Naive thymus-derived CD4-positive, alpha-beta T cell (primary cell): ENCODE measurements at regions of chr12 and their contacts with region 1.

Region 1: GRCh38 chr12:116559162-116559935 is at the start of gene MAP1LC3B2:
- DNase-seq: peak; percentile 53 to 85 (median 77)
- ATAC-seq: peak; percentile 92
- H3K4me3 ChIP-seq: peak within 1 kb of the TSS; percentile 54
- H3K4me3 Mint-ChIP-seq: peak within 1 kb of the TSS; percentile 70 to 90 (median 86)
- H3K27ac ChIP-seq: peak within 1 kb of the TSS; percentile 49
- H3K27ac Mint-ChIP-seq: peak within 1 kb of the TSS; percentile 88 to 99 (median 96)
- H3K4me1 ChIP-seq: peaks cover 29% of the 10 kb centered on the region in 2 donors
- H3K4me1 Mint-ChIP-seq: peaks cover 24 to 54% (median 48%) of the 10 kb centered on the region in 7 donors
- H3K27me3 ChIP-seq: no peaks in the 10 kb centered on the region
- H3K27me3 Mint-ChIP-seq: peaks cover 0 to 6% (median 0%) of the 10 kb centered on the region in 5 donors
- total RNA-seq, gene MAP1LC3B2: 0.48 to 6.6 (median 1.5) TPM

Region 2: GRCh38 chr12:116060764-116061163 is 498.6 kb before region 1 on chr12:
- CTCF ChIA-PET with region 1: no interaction called
- POLR2A ChIA-PET with region 1: no interaction called
- intact Hi-C with region 1: loop called in 1 of 2 experiments (anchors 2 kb)
- DNase-seq: peak in 6 of 9 donors; percentile 1 to 38 (median 26)
- ATAC-seq: peak; percentile 86
- H3K4me3 ChIP-seq: no peak overlapping the region
- H3K4me3 Mint-ChIP-seq: peak overlapping the region; percentile 16 to 81 (median 56)
- H3K27ac ChIP-seq: no peak overlapping the region
- H3K27ac Mint-ChIP-seq: peak overlapping the region in 7 of 9 donors; percentile 27 to 92 (median 48)
- H3K4me1 ChIP-seq: peaks cover 4 to 7% of the 10 kb centered on the region in 2 donors
- H3K4me1 Mint-ChIP-seq: peaks cover 14 to 72% (median 59%) of the 10 kb centered on the region in 7 donors
- H3K27me3 ChIP-seq: no peaks in the 10 kb centered on the region
- H3K27me3 Mint-ChIP-seq: no peaks in the 10 kb centered on the region

Region 3: DNA sequence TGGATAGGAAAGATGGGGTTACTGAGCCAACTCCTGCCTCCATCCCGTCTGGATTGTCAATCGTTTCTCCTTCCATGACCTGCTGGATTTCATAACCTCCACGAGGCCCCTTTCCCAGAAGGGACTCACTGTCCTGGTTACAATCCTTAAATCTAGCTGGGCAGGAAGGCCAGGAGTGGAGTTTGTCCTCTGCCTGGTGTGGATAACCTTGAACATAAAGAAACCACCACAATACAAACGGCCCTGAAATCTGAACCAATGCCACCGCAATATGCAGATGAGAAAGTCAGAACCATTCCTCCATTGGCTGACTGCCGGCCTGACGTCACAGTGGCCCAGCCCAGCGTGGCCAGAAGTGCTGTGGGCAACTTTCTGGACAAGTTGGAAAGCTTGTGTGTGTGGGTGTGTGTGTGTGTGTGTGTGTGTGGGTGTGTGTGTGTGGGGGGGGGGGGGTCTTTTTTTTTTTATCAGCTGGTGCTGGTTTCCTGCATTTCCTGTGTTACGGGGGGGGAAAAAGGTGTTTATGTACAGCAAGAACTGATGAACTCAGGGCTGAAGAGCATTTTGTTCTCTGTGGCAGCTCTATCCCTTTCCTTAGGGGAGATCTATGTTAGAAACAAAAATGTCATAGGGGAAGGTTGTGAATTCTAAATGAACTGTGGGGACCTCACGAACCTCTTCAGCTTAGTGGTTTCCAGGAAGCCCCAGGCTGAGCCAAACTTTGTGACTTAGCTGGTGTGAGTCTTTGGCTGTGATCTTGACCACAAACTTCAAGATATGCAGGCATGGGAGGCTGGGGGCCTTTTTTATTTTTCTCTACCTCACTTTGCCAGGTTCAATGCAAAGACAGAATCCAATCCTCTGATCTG is 200.2 kb before region 1 on chr12:
- CTCF ChIA-PET with region 1: no interaction called
- POLR2A ChIA-PET with region 1: no interaction called
- intact Hi-C with region 1: loop called in 1 of 2 experiments (anchors 5 kb)
- DNase-seq: peak; percentile 45 to 74 (median 57)
- ATAC-seq: peak; percentile 93
- H3K4me3 ChIP-seq: peak overlapping the region; percentile 49
- H3K4me3 Mint-ChIP-seq: peak overlapping the region; percentile 77 to 88 (median 84)
- H3K27ac ChIP-seq: peak overlapping the region; percentile 58
- H3K27ac Mint-ChIP-seq: peak overlapping the region; percentile 75 to 90 (median 86)
- H3K4me1 ChIP-seq: peaks cover 15 to 27% of the 10 kb centered on the region in 2 donors
- H3K4me1 Mint-ChIP-seq: peaks cover 21 to 43% (median 31%) of the 10 kb centered on the region in 7 donors
- H3K27me3 ChIP-seq: no peaks in the 10 kb centered on the region
- H3K27me3 Mint-ChIP-seq: no peaks in the 10 kb centered on the region

Region 4: DNA sequence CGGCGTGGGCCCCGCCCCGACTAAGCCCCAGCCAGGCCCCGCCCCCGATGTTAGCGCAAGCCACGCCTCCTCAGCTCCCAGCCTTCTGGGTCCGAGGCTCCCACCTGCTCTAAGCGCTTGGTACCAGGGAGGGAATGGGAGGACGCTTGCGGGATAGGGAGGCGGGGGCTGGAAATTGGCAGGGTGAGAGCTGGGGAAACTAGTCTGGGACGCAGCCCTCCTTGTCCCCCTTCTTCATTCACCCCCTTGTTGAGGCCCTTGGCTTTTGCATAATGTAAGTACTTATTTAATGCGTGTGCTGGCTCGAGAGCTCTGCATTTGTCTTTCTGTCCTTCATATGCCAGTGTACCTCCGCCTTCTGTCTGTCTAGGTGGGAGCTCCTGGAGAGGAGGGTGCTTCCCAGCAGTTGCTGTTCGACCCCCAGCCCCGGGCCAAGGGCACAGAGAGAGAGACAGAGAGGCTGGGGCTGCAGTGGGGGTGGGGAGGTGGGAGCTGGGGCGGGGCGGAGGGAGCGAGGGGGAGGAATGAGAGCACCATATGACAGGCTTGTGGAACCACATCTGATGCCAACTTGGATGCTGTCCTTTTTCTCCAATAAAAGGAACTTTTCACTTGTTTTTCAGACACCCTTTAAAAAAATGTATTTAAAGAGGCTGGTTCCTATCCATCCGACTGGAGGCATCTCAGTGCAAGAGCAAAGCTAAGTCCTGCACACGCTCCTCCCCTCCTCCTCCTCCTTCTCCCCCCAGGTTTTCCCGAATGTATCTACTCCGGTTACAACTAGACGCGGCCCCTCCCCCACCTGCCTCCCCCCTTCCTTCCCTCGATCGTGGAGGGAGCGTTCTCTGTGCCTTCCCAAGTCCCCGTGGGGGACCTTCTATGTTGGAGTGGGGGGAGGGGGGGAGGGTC is 25.8 kb before region 1 on chr12:
- CTCF ChIA-PET with region 1: interaction called, 4 read pairs
- POLR2A ChIA-PET with region 1: interaction called, 8 read pairs
- intact Hi-C with region 1: loop called (anchors 1 kb)
- DNase-seq: peak; percentile 47 to 79 (median 69)
- ATAC-seq: peak; percentile 95
- H3K4me3 ChIP-seq: peak overlapping the region; percentile 84
- H3K4me3 Mint-ChIP-seq: peak overlapping the region; percentile 82 to 97 (median 88)
- H3K27ac ChIP-seq: peak overlapping the region; percentile 47
- H3K27ac Mint-ChIP-seq: peak overlapping the region in 8 of 9 donors; percentile 22 to 82 (median 70)
- H3K4me1 ChIP-seq: peaks cover 6 to 9% of the 10 kb centered on the region in 2 donors
- H3K4me1 Mint-ChIP-seq: peaks cover 20 to 40% (median 28%) of the 10 kb centered on the region in 7 donors
- H3K27me3 ChIP-seq: no peaks in the 10 kb centered on the region
- H3K27me3 Mint-ChIP-seq: peaks cover 0 to 14% (median 0%) of the 10 kb centered on the region in 5 donors

Region 5: GRCh38 chr12:116577154-116577561 is 17.8 kb after region 1 on chr12:
- CTCF ChIA-PET with region 1: no interaction called
- POLR2A ChIA-PET with region 1: interaction called, 4 read pairs
- intact Hi-C with region 1: loop called in 1 of 2 experiments (anchors 2 kb)
- DNase-seq: no peak
- ATAC-seq: no peak
- H3K4me3 ChIP-seq: no peak overlapping the region
- H3K4me3 Mint-ChIP-seq: no peak overlapping the region
- H3K27ac ChIP-seq: no peak overlapping the region
- H3K27ac Mint-ChIP-seq: peak overlapping the region in 1 of 9 donors; percentile 6
- H3K4me1 ChIP-seq: no peaks in the 10 kb centered on the region
- H3K4me1 Mint-ChIP-seq: peaks cover 0 to 16% (median 2%) of the 10 kb centered on the region in 7 donors
- H3K27me3 ChIP-seq: no peaks in the 10 kb centered on the region
- H3K27me3 Mint-ChIP-seq: peaks cover 0 to 14% (median 0%) of the 10 kb centered on the region in 5 donors

Region 6: GRCh38 chr12:116673681-116674111 is 114.3 kb after region 1 on chr12:
- CTCF ChIA-PET with region 1: no interaction called
- POLR2A ChIA-PET with region 1: no interaction called
- intact Hi-C with region 1: loop called in 1 of 2 experiments (anchors 2 kb)
- DNase-seq: peak in 1 of 9 donors; percentile 10
- ATAC-seq: no peak
- H3K4me3 ChIP-seq: no peak overlapping the region
- H3K4me3 Mint-ChIP-seq: peak overlapping the region; percentile 16 to 93 (median 75)
- H3K27ac ChIP-seq: no peak overlapping the region
- H3K27ac Mint-ChIP-seq: peak overlapping the region in 7 of 9 donors; percentile 83 to 97 (median 95)
- H3K4me1 ChIP-seq: peaks cover 12 to 21% of the 10 kb centered on the region in 2 donors
- H3K4me1 Mint-ChIP-seq: peaks cover 28 to 56% (median 43%) of the 10 kb centered on the region in 7 donors
- H3K27me3 ChIP-seq: no peaks in the 10 kb centered on the region
- H3K27me3 Mint-ChIP-seq: peaks cover 0 to 2% (median 0%) of the 10 kb centered on the region in 5 donors

Region 7: DNA sequence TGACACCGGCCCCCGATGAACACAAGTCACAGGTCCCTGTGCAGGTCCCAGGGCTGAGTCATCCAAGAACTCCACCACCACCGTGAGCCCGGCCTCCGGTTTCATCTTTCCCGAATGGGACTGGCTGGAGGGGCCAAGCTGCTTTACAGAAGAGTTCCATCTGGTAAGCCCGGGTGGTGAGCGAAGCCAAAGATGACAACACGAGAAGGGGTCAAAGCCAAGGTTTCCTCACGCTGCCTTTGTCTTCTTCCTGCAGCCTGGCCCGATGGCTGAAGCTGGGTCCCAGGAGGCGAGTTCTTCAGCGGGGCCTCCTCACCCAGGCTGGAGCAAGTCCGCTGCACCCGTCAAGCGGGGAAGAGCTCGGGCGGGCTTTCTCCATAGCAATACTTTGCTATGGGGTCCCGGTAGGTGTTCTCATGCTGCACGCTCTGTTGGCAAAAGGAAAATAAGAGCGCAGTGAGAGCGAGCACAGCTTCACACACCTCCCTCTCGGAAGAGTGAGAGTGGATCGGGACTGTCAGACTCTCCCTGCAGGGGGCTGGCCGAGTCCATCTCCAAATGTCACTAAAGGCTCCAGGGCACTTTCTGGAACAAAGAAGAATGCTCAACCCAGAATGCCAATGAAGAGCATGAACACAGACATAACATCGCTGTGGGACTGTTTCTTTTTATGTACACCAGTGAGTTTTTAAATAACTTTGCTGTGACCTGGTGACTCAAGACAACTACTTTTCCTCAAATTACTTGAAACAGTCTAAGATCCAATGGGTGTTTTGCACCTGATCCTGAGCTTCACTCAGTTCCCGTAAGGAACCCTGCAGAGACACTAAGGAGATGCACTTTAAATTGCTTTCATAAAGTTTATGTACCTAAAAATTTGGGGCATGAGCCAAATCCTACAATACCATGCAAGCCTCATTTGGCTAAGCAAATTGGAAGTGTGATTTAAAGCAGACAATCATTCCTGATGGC is 158.4 kb after region 1 on chr12:
- CTCF ChIA-PET with region 1: no interaction called
- POLR2A ChIA-PET with region 1: no interaction called
- intact Hi-C with region 1: no loop called
- DNase-seq: no peak
- ATAC-seq: no peak
- H3K4me3 ChIP-seq: no peak overlapping the region
- H3K4me3 Mint-ChIP-seq: no peak overlapping the region
- H3K27ac ChIP-seq: no peak overlapping the region
- H3K27ac Mint-ChIP-seq: no peak overlapping the region
- H3K4me1 ChIP-seq: no peaks in the 10 kb centered on the region
- H3K4me1 Mint-ChIP-seq: peaks cover 0 to 8% (median 3%) of the 10 kb centered on the region in 7 donors
- H3K27me3 ChIP-seq: no peaks in the 10 kb centered on the region
- H3K27me3 Mint-ChIP-seq: no peaks in the 10 kb centered on the region

Region 8: GRCh38 chr12:116924558-116925453 is 365.5 kb after region 1 on chr12:
- CTCF ChIA-PET with region 1: no interaction called
- POLR2A ChIA-PET with region 1: no interaction called
- intact Hi-C with region 1: loop called in 1 of 2 experiments (anchors 1 kb)
- DNase-seq: peak in 8 of 9 donors; percentile 46 to 86 (median 80)
- ATAC-seq: peak; percentile 96
- H3K4me3 ChIP-seq: peak overlapping the region; percentile 21
- H3K4me3 Mint-ChIP-seq: peak overlapping the region; percentile 27 to 82 (median 77)
- H3K27ac ChIP-seq: no peak overlapping the region
- H3K27ac Mint-ChIP-seq: peak overlapping the region; percentile 40 to 82 (median 62)
- H3K4me1 ChIP-seq: peaks cover 26 to 59% of the 10 kb centered on the region in 2 donors
- H3K4me1 Mint-ChIP-seq: peaks cover 51 to 86% (median 70%) of the 10 kb centered on the region in 7 donors
- H3K27me3 ChIP-seq: no peaks in the 10 kb centered on the region
- H3K27me3 Mint-ChIP-seq: peaks cover 0 to 8% (median 0%) of the 10 kb centered on the region in 5 donors

Region 9: GRCh38 chr12:118326991-118327390 is 1767.6 kb after region 1 on chr12:
- CTCF ChIA-PET with region 1: no interaction called
- POLR2A ChIA-PET with region 1: no interaction called
- intact Hi-C with region 1: no loop called
- DNase-seq: no peak
- ATAC-seq: no peak
- H3K4me3 ChIP-seq: no peak overlapping the region
- H3K4me3 Mint-ChIP-seq: no peak overlapping the region
- H3K27ac ChIP-seq: no peak overlapping the region
- H3K27ac Mint-ChIP-seq: peak overlapping the region in 1 of 9 donors; percentile 44
- H3K4me1 ChIP-seq: no peaks in the 10 kb centered on the region
- H3K4me1 Mint-ChIP-seq: peaks cover 20 to 67% (median 41%) of the 10 kb centered on the region in 7 donors
- H3K27me3 ChIP-seq: no peaks in the 10 kb centered on the region
- H3K27me3 Mint-ChIP-seq: no peaks in the 10 kb centered on the region